Activated B cell treated with CpG ODN at 0.5 μM for 24 hours (primary cell): ENCODE measurements at regions of chr19 and their contacts with region 1.

Region 1: GRCh38 chr19:1131738-1132551 is 28.2 kb downstream of the GPX4 start:
- DNase-seq: peak; percentile 76
- ATAC-seq: peak; percentile 65
- H3K4me3 Mint-ChIP-seq: peak overlapping the region; percentile 86
- H3K27ac Mint-ChIP-seq: peak overlapping the region; percentile 77
- H3K4me1 Mint-ChIP-seq: peaks cover 47% of the 10 kb centered on the region
- H3K27me3 Mint-ChIP-seq: no peaks in the 10 kb centered on the region
- CTCF ChIP-seq: no peak

Region 2: DNA sequence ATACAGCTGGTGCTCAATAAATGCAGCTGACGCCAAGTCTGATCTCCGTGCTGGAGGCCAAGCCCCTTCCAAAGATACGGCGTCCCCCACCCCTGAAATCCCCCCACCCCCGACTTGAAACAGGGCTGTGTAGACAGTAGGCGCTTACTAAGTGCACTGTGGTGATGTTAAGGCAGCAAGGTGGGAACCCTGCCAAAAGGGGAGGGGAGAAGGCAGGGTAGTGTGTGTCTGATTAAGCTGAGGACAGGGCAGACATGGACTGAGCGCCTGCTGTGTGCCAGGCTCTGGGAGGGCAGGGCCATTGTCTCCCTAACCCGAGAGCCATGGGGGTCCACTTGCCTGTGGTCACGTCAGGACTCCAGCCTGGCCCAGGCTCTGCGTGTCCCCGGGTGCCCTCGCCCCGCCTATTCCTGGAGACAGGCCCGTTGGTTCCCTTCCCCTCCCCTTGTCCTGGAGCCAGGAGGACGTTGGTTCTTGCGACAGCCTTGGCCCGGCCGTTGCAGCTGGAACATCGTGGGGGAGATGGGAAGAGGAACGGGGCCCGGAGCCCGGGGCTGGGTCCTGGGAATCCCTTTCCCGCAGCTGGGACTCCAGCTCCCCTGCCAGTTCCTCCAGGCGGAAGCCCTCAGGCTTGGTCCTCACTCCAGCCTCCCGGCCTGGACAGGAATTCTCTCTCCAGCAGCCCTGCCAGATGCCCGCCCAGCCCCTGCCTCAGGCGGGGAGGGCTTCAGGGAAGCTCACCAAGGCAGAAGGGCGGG is 281.5 kb before region 1 on chr19:
- CTCF ChIA-PET with region 1: no interaction called
- POLR2A ChIA-PET with region 1: no interaction called
- intact Hi-C with region 1: no loop called
- DNase-seq: no peak
- ATAC-seq: no peak
- H3K4me3 Mint-ChIP-seq: no peak overlapping the region
- H3K27ac Mint-ChIP-seq: no peak overlapping the region
- H3K4me1 Mint-ChIP-seq: peaks cover 5% of the 10 kb centered on the region
- H3K27me3 Mint-ChIP-seq: peaks cover 35% of the 10 kb centered on the region
- CTCF ChIP-seq: no peak

Region 3: GRCh38 chr19:947265-948036 is 184.5 kb before region 1 on chr19:
- CTCF ChIA-PET with region 1: no interaction called
- POLR2A ChIA-PET with region 1: no interaction called
- intact Hi-C with region 1: loop called (anchors 5 kb)
- DNase-seq: peak; percentile 84
- ATAC-seq: peak; percentile 76
- H3K4me3 Mint-ChIP-seq: peak overlapping the region; percentile 81
- H3K27ac Mint-ChIP-seq: peak overlapping the region; percentile 93
- H3K4me1 Mint-ChIP-seq: peaks cover 57% of the 10 kb centered on the region
- H3K27me3 Mint-ChIP-seq: no peaks in the 10 kb centered on the region
- CTCF ChIP-seq: no peak

Region 4: DNA sequence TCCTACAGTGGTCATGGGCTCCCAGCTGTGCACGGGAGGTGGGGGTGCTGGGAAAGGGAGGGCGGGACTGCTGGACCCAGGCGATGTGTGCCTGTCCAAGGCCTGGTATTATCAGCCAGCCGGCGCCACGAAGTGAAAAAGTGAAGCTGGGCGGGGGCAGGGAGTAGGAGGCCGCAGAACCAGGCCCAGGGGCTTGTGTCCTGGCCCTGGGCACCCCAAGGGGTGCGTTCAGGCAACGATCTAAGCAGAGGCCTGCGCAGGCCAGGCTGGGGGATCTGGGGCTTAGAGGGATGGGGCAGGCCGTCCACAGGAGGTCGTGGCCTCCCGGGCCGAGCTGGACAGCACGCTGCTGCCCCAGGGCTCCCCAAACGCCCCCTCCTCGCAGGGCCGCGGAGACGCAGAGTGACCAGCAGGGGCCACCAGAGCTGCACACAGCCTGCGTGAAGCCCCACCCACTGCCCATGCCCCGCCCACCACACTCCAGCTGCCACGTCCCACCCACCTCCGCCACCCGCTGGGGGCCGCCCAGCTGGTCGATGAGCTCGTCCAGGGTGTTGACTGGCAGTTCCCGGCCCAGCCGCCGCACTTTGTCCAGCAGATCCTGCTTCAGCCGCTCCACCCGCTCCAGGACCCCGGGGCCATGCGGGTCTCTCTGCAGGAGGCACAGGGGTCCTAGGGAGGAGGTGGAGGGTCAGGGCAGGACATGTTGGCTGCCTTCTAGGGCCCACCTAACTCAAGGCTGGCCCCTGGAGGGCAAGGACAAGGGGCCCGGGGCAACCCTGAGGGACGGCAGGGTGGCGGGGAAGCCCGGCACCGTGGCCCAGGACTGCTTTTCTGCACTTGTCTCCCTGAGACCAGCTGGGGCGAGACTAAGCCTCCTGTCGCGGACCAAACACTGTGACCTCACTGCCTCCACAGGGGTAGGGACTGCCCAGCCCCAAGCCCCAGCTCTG is 18.6 kb before region 1 on chr19:
- CTCF ChIA-PET with region 1: interaction called, 15 read pairs
- POLR2A ChIA-PET with region 1: interaction called, 7 read pairs
- intact Hi-C with region 1: loop called (anchors 2 kb)
- DNase-seq: peak; percentile 84
- ATAC-seq: peak; percentile 95
- H3K4me3 Mint-ChIP-seq: no peak overlapping the region
- H3K27ac Mint-ChIP-seq: peak overlapping the region; percentile 41
- H3K4me1 Mint-ChIP-seq: peaks cover 5% of the 10 kb centered on the region
- H3K27me3 Mint-ChIP-seq: no peaks in the 10 kb centered on the region
- CTCF ChIP-seq: no peak

Region 5: GRCh38 chr19:1173845-1174809 is 42.2 kb after region 1 on chr19 and contains the start of gene SBNO2:
- CTCF ChIA-PET with region 1: interaction called, 5 read pairs
- POLR2A ChIA-PET with region 1: interaction called, 25 read pairs
- intact Hi-C with region 1: loop called (anchors 1 kb)
- DNase-seq: peak; percentile 98
- ATAC-seq: peak; percentile 93
- H3K4me3 Mint-ChIP-seq: peak within 1 kb of the TSS; percentile 91
- H3K27ac Mint-ChIP-seq: peak within 1 kb of the TSS; percentile 89
- H3K4me1 Mint-ChIP-seq: peaks cover 26% of the 10 kb centered on the region
- H3K27me3 Mint-ChIP-seq: no peaks in the 10 kb centered on the region
- CTCF ChIP-seq: no peak
- total RNA-seq, gene SBNO2: 111 and 127 TPM in 2 replicates

Region 6: DNA sequence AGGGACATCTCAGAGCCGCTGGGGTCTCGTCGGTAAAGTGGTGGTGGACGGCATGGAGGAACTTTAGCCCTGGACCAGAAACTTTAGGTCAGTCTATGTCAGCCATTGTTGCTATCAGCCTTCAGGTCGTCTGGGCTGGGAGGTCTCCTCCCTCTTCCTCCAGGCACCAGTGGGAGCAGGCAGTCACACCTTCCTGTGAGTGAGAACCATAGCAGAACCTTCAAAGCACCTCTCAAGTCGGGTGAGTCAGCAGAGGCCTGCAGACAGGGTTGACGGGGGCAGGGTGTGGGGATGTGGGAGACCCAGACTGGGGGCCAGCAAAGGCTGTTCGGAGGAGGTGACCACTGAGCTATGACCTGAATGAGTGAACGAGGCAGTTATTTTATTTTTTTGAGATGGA is 57.5 kb after region 1 on chr19:
- CTCF ChIA-PET with region 1: no interaction called
- POLR2A ChIA-PET with region 1: no interaction called
- intact Hi-C with region 1: loop called (anchors 5 kb)
- DNase-seq: no peak
- ATAC-seq: no peak
- H3K4me3 Mint-ChIP-seq: no peak overlapping the region
- H3K27ac Mint-ChIP-seq: no peak overlapping the region
- H3K4me1 Mint-ChIP-seq: no peaks in the 10 kb centered on the region
- H3K27me3 Mint-ChIP-seq: no peaks in the 10 kb centered on the region
- CTCF ChIP-seq: no peak